Adrenal gland (tissue), 19 donors: ENCODE measurements at regions of chr18 and their contacts with region 1.

Region 1: GRCh38 chr18:35231052-35231451 is 9.8 kb upstream of the ZNF397 start:
- DNase-seq: peak; percentile 80 to 96 (median 88)
- H3K4me3 ChIP-seq: peak overlapping the region in 1 of 4 donors; percentile 18
- H3K27ac ChIP-seq: no peak overlapping the region
- H3K4me1 ChIP-seq: no peaks in the 10 kb centered on the region
- H3K27me3 ChIP-seq: no peaks in the 10 kb centered on the region
- CTCF ChIP-seq: peak; percentile 85 to 95 (median 90)
- POLR2A ChIP-seq: no peak

Region 2: DNA sequence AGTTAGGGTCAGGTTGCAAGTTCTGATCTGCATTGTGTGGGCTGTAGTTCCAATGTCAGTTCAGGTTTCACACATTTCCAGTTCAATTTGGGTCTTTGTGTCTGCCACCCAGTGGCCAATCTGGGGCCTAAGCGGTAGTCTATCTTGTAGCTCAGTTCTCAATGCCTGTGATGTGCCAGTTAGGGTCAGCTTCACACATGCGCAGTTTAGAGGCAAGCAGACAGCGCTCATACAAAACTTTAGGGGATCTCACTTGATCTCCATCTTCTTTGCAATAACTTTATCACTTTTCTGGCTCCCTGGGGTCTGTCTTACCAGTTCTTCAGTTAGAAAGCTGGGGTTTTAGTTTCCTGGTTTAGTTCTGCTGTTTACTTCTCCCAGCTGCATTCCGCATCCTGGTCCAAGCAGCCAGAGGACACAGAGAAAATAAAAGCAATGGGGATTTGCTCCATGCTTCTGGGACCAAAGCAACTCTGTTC is 124.1 kb after region 1 on chr18:
- intact Hi-C with region 1: loop called in 1 of 2 experiments (anchors 5 kb)
- DNase-seq: peak; percentile 68 to 93 (median 82)
- H3K4me3 ChIP-seq: no peak overlapping the region
- H3K27ac ChIP-seq: no peak overlapping the region
- H3K4me1 ChIP-seq: no peaks in the 10 kb centered on the region
- H3K27me3 ChIP-seq: no peaks in the 10 kb centered on the region
- CTCF ChIP-seq: peak; percentile 48 to 82 (median 74)
- POLR2A ChIP-seq: no peak

Region 3: DNA sequence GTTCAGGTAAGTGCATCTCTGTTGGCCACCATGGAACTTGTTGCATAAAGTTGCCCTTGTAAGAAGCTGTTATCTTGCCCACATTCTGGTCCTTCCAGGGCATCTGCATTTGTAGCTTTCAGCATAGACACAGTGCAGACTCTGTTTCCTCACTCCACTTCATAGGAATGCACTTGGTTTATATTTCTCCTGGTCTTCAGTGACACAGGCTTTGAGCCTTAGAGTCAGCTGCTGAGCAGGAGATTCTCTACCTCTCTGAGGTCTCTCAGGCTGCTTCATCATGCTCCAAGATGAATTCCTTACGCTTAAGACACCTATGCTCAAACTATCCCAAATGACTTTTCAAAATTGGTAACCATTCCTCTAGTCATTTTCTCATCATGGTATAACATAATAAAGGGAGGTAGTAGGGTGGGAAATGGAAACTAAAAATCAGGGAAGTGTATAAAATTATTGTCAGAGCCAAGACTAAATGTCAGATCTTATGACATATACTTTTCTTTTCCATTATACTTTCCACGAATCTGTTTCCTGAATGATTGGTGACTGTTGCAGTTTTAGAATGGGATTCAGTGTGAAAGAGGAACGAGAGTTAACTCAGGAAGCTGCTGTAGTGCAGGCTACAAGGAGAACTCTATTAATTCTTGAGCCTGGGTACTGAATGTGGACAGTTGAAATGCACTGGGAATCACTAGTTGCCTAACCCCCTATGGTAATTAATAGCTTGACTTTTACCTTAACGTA is 422.5 kb after region 1 on chr18:
- intact Hi-C with region 1: no loop called
- DNase-seq: no peak
- H3K4me3 ChIP-seq: no peak overlapping the region
- H3K27ac ChIP-seq: no peak overlapping the region
- H3K4me1 ChIP-seq: no peaks in the 10 kb centered on the region
- H3K27me3 ChIP-seq: no peaks in the 10 kb centered on the region
- CTCF ChIP-seq: no peak
- POLR2A ChIP-seq: no peak